CD4-positive, alpha-beta memory T cell (primary cell): ENCODE measurements at regions of chr5 and their contacts with region 1.

Region 1: DNA sequence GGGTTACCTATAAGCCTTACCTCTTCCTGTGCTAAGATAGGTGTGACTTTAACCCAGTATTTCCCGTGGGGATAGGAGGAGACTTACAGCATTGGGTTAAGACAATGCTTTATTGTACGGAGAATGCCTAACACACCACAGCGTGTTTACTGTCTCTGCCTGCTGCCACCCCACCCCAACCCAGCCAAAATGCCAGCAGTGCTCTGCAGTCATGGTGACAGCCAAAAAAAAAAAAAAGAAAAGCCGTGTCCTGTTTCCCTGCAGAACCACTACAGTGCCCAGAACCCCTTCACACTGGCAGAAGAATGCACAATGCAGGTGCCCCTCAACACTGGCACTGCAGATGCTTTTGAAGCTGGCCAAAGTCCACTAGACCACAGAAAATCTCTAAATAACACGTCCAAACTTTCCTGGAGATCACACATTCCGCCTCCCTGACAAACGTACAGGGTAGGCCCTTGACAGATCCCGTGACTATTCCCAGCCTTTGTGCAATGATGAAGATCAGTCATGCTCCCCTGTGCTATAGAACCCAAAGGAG is 102.2 kb downstream of the SERINC5 start:
- DNase-seq: peak in 4 of 5 donors; percentile 45 to 58 (median 50)
- H3K4me3 ChIP-seq: no peak overlapping the region
- H3K4me3 Mint-ChIP-seq: peak overlapping the region in 7 of 8 donors; percentile 66 to 85 (median 79)
- H3K27ac ChIP-seq: no peak overlapping the region
- H3K27ac Mint-ChIP-seq: peak overlapping the region; percentile 83 to 97 (median 96)
- H3K4me1 ChIP-seq: peaks cover 57% of the 10 kb centered on the region
- H3K4me1 Mint-ChIP-seq: peaks cover 48 to 81% (median 62%) of the 10 kb centered on the region in 4 donors
- H3K27me3 ChIP-seq: no peaks in the 10 kb centered on the region
- H3K27me3 Mint-ChIP-seq: no peaks in the 10 kb centered on the region

Region 2: GRCh38 chr5:80125962-80126480 is 27.6 kb before region 1 on chr5:
- CTCF ChIA-PET with region 1: interaction called, 3 read pairs
- POLR2A ChIA-PET with region 1: interaction called, 12 read pairs
- intact Hi-C with region 1: no loop called
- DNase-seq: peak in 1 of 5 donors; percentile 33
- H3K4me3 ChIP-seq: no peak overlapping the region
- H3K4me3 Mint-ChIP-seq: peak overlapping the region in 7 of 8 donors; percentile 8 to 82 (median 44)
- H3K27ac ChIP-seq: no peak overlapping the region
- H3K27ac Mint-ChIP-seq: peak overlapping the region; percentile 10 to 85 (median 64)
- H3K4me1 ChIP-seq: peaks cover 37% of the 10 kb centered on the region
- H3K4me1 Mint-ChIP-seq: peaks cover 47 to 67% (median 55%) of the 10 kb centered on the region in 4 donors
- H3K27me3 ChIP-seq: no peaks in the 10 kb centered on the region
- H3K27me3 Mint-ChIP-seq: no peaks in the 10 kb centered on the region

Region 3: GRCh38 chr5:80134879-80135278 is 18.8 kb before region 1 on chr5:
- CTCF ChIA-PET with region 1: interaction called, 5 read pairs
- POLR2A ChIA-PET with region 1: interaction called, 61 read pairs
- intact Hi-C with region 1: loop called (anchors 2 kb)
- DNase-seq: no peak
- H3K4me3 ChIP-seq: no peak overlapping the region
- H3K4me3 Mint-ChIP-seq: peak overlapping the region; percentile 7 to 87 (median 77)
- H3K27ac ChIP-seq: peak overlapping the region; percentile 54
- H3K27ac Mint-ChIP-seq: peak overlapping the region; percentile 69 to 97 (median 92)
- H3K4me1 ChIP-seq: peaks cover 86% of the 10 kb centered on the region
- H3K4me1 Mint-ChIP-seq: peaks cover 70 to 88% (median 80%) of the 10 kb centered on the region in 4 donors
- H3K27me3 ChIP-seq: no peaks in the 10 kb centered on the region
- H3K27me3 Mint-ChIP-seq: no peaks in the 10 kb centered on the region

Region 4: DNA sequence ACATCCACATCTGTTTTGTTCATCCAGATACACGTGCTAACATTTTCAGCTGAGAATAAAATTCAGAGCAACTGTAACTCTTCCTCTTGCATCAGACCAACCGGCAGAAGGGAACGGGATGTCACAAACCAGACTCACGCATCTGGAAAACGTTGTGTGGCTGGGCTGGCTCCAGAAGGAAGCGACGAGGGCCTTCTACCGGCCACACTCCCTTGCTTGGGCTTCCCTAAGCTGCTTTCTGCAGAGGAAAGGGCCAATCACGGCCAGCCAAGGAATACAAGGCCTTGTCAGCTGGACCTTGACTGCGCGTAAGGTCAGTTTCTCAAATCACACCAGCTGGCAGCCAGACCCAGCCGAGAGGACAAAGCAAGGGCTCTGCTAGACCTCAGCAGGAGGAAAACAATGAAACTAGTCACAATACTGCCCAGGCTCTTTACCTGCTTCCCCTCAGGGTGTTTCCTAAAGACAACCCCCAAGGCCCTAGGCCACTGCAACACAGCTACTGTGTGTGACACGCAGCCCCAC is 12.4 kb before region 1 on chr5:
- CTCF ChIA-PET with region 1: interaction called, 5 read pairs
- POLR2A ChIA-PET with region 1: interaction called, 61 read pairs
- intact Hi-C with region 1: loop called (anchors 1 kb)
- DNase-seq: no peak
- H3K4me3 ChIP-seq: no peak overlapping the region
- H3K4me3 Mint-ChIP-seq: peak overlapping the region in 7 of 8 donors; percentile 18 to 82 (median 60)
- H3K27ac ChIP-seq: peak overlapping the region; percentile 37
- H3K27ac Mint-ChIP-seq: peak overlapping the region; percentile 89 to 96 (median 95)
- H3K4me1 ChIP-seq: peaks cover 86% of the 10 kb centered on the region
- H3K4me1 Mint-ChIP-seq: peaks cover 65 to 82% (median 75%) of the 10 kb centered on the region in 4 donors
- H3K27me3 ChIP-seq: no peaks in the 10 kb centered on the region
- H3K27me3 Mint-ChIP-seq: no peaks in the 10 kb centered on the region

Region 5: DNA sequence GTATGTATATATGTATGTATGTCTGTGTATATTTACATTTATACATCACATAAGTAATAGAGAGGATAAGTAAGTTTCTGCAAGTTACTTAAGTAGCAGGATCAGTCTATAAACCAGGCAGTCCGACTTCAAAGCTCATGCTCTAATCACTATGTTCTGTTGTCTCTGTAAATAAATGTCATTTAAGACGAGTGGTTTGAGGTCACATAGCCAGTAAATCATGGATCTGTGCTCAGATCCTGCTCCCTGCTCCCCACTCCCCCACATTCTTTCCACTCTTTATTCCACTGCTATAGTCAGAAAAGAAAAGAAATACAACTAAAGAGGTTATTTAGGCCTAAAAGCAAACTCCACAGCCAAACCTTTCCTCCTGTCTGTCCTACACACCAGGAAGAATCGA is 11.8 kb after region 1 on chr5:
- CTCF ChIA-PET with region 1: interaction called, 5 read pairs
- POLR2A ChIA-PET with region 1: interaction called, 16 read pairs
- intact Hi-C with region 1: loop called (anchors 2 kb)
- DNase-seq: no peak
- H3K4me3 ChIP-seq: no peak overlapping the region
- H3K4me3 Mint-ChIP-seq: peak overlapping the region in 1 of 8 donors; percentile 34
- H3K27ac ChIP-seq: no peak overlapping the region
- H3K27ac Mint-ChIP-seq: peak overlapping the region in 6 of 7 donors; percentile 29 to 82 (median 60)
- H3K4me1 ChIP-seq: peaks cover 38% of the 10 kb centered on the region
- H3K4me1 Mint-ChIP-seq: peaks cover 36 to 65% (median 53%) of the 10 kb centered on the region in 4 donors
- H3K27me3 ChIP-seq: no peaks in the 10 kb centered on the region
- H3K27me3 Mint-ChIP-seq: no peaks in the 10 kb centered on the region

Region 6: GRCh38 chr5:80172067-80172695 is 18.5 kb after region 1 on chr5:
- CTCF ChIA-PET with region 1: no interaction called
- POLR2A ChIA-PET with region 1: interaction called, 7 read pairs
- intact Hi-C with region 1: loop called (anchors 2 kb)
- DNase-seq: no peak
- H3K4me3 ChIP-seq: no peak overlapping the region
- H3K4me3 Mint-ChIP-seq: no peak overlapping the region
- H3K27ac ChIP-seq: no peak overlapping the region
- H3K27ac Mint-ChIP-seq: peak overlapping the region in 5 of 7 donors; percentile 6 to 86 (median 48)
- H3K4me1 ChIP-seq: peaks cover 39% of the 10 kb centered on the region
- H3K4me1 Mint-ChIP-seq: peaks cover 20 to 62% (median 37%) of the 10 kb centered on the region in 4 donors
- H3K27me3 ChIP-seq: no peaks in the 10 kb centered on the region
- H3K27me3 Mint-ChIP-seq: no peaks in the 10 kb centered on the region